ENCODE measurements at regions of chr18 and their contacts with region 1.

Region 1: DNA sequence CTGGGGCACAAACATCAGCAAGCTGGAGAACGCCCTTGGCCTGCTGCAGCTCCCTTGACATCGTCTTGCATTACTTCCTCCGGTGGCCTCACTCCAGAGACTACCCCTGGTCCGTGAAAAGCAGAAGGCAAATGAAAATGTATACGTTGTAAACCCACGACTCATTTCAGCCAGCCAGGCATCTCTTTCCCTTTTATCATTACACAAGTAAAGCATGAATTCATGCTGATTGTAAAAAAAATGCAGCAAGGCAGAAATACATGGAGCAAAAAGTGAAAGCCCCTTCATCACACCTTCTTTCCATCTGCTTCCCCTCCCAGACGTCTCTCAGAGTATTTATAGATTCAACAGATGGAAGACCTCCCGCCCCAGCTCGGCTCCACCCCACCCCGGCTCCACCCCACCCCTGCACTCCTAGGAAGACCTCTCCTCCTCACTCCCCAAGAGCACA is 41.6 kb upstream of the RALBP1 start:
- DNase-seq: no peak
- H3K4me3 ChIP-seq: no peak overlapping the region
- H3K27ac ChIP-seq: no peak overlapping the region
- H3K4me1 ChIP-seq: peaks cover 16% of the 10 kb centered on the region
- H3K27me3 ChIP-seq: no peaks in the 10 kb centered on the region
- CTCF ChIP-seq: no peak

Region 2: GRCh38 chr18:11407940-11408339 is 1974.2 kb after region 1 on chr18:
- CTCF ChIA-PET with region 1: interaction called, 22 read pairs
- dilution Hi-C with region 1: no loop called
- in situ Hi-C with region 1: no loop called
- intact Hi-C with region 1: no loop called
- DNase-seq: no peak
- H3K4me3 ChIP-seq: no peak overlapping the region
- H3K27ac ChIP-seq: no peak overlapping the region
- H3K4me1 ChIP-seq: no peaks in the 10 kb centered on the region
- H3K27me3 ChIP-seq: peaks cover 2% of the 10 kb centered on the region
- CTCF ChIP-seq: no peak